Right cardiac atrium (tissue), 5 donors: ENCODE measurements at regions of chr5 and their contacts with region 1.

Region 1: GRCh38 chr5:33997331-33997983 is 10.4 kb downstream of the AMACR start:
- DNase-seq: peak; percentile 60 to 67 (median 61)
- ATAC-seq: peak; percentile 76 to 78
- H3K4me3 ChIP-seq: no peak overlapping the region
- H3K27ac ChIP-seq: peak overlapping the region; percentile 48
- H3K4me1 ChIP-seq: peaks cover 4% of the 10 kb centered on the region
- H3K27me3 ChIP-seq: no peaks in the 10 kb centered on the region

Region 2: GRCh38 chr5:34459908-34460307 is 462.5 kb after region 1 on chr5:
- intact Hi-C with region 1: loop called in 2 of 4 experiments (anchors 10 kb)
- DNase-seq: no peak
- ATAC-seq: no peak
- H3K4me3 ChIP-seq: no peak overlapping the region
- H3K27ac ChIP-seq: no peak overlapping the region
- H3K4me1 ChIP-seq: no peaks in the 10 kb centered on the region
- H3K27me3 ChIP-seq: no peaks in the 10 kb centered on the region